ENCODE measurements at regions of chr5 and their contacts with region 1.

Region 1: GRCh38 chr5:18465833-18466591 is 831.8 kb downstream of the TAF11L14 start:
- DNase-seq: peak; percentile 17
- ATAC-seq: peak; percentile 97
- H3K4me3 ChIP-seq: no peak overlapping the region
- H3K27ac ChIP-seq: no peak overlapping the region
- H3K4me1 ChIP-seq: no peaks in the 10 kb centered on the region
- H3K27me3 ChIP-seq: no peaks in the 10 kb centered on the region
- CTCF ChIP-seq: peak; percentile 67 to 83 (median 72)
- EP300 ChIP-seq: no peak
- POLR2A ChIP-seq: no peak
- RAD21 ChIP-seq: peak; percentile 92

Region 2: GRCh38 chr5:17665836-17666235 is 800.2 kb before region 1 on chr5:
- CTCF ChIA-PET with region 1: no interaction called
- POLR2A ChIA-PET with region 1: no interaction called
- RAD21 ChIA-PET with region 1: no interaction called
- SMC1A ChIA-PET with region 1: no interaction called
- in situ Hi-C with region 1: no loop called
- intact Hi-C with region 1: no loop called
- DNase-seq: no peak
- ATAC-seq: no peak
- H3K4me3 ChIP-seq: no peak overlapping the region
- H3K27ac ChIP-seq: no peak overlapping the region
- H3K4me1 ChIP-seq: no peaks in the 10 kb centered on the region
- H3K27me3 ChIP-seq: no peaks in the 10 kb centered on the region
- CTCF ChIP-seq: no peak
- EP300 ChIP-seq: no peak
- POLR2A ChIP-seq: no peak
- RAD21 ChIP-seq: no peak

Region 3: GRCh38 chr5:18455521-18455920 is 10.5 kb before region 1 on chr5:
- CTCF ChIA-PET with region 1: interaction called, 23 read pairs
- POLR2A ChIA-PET with region 1: no interaction called
- RAD21 ChIA-PET with region 1: no interaction called
- SMC1A ChIA-PET with region 1: interaction called, 12 read pairs
- in situ Hi-C with region 1: no loop called
- intact Hi-C with region 1: no loop called
- DNase-seq: no peak
- ATAC-seq: no peak
- H3K4me3 ChIP-seq: no peak overlapping the region
- H3K27ac ChIP-seq: no peak overlapping the region
- H3K4me1 ChIP-seq: no peaks in the 10 kb centered on the region
- H3K27me3 ChIP-seq: no peaks in the 10 kb centered on the region
- CTCF ChIP-seq: no peak
- EP300 ChIP-seq: no peak
- POLR2A ChIP-seq: no peak
- RAD21 ChIP-seq: no peak

Region 4: DNA sequence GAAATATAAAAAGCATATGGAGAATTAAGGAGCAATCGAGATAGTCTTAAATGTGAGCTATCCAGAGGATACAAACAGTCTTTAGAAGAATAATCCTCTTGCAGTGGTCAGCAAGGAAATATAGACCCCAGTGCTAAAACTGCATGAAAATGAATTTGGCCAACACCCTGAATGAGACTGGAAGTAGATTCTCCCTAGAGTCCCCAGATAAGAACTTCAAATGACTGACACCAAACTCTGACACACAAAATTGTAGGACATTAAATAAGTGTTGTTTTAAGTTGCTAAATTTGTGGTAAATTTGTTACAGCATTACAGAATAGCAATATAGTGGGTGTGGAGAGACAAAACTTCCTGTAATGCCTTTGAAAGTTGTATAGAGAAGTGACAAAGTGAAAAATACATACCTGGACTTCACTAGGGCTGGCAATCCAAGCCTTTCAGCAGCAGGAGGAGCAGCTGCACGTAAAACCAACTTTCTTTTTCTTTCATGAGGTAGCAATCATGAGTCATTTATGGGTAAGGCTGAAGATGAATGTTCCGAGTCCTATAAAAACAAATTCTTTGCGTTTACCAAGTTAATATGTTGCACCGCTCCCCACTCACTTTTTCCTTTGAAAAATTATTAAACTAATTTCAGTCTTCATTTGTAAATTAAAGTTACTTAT is 306.3 kb after region 1 on chr5:
- CTCF ChIA-PET with region 1: no interaction called
- POLR2A ChIA-PET with region 1: no interaction called
- RAD21 ChIA-PET with region 1: no interaction called
- SMC1A ChIA-PET with region 1: interaction called, 4 read pairs
- in situ Hi-C with region 1: no loop called
- intact Hi-C with region 1: loop called (anchors 10 kb)
- DNase-seq: no peak
- ATAC-seq: peak; percentile 86
- H3K4me3 ChIP-seq: no peak overlapping the region
- H3K27ac ChIP-seq: no peak overlapping the region
- H3K4me1 ChIP-seq: no peaks in the 10 kb centered on the region
- H3K27me3 ChIP-seq: no peaks in the 10 kb centered on the region
- CTCF ChIP-seq: peak in 2 of 3 experiments; percentile 38 to 50; a peak in 3 of 6 replicates
- EP300 ChIP-seq: no peak
- POLR2A ChIP-seq: no peak
- RAD21 ChIP-seq: peak; percentile 32

Region 5: DNA sequence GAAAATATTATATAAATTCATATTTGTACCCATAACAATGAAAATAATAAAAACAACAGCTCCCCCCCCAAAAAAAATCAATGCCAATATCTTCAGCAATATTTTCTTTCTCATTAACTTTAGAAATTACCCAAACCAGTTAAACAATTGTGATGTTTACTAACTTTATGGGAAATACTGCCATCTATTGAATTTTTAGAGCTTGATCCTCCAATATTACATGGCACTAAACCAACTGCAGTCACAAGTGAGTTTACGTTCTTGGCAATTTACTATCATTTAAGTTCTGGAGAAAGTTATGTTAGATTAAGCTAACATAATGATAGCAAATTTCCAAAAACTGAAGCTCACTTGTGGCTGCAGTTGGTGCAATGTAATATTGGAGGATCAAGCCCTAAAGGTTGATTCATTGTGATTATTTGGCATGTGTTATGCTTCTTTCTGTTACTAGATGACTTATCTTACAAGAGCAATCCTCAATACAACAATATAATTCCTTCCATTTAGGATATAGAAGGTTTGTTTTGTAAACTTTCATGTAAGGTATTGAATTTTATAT is 1142.5 kb after region 1 on chr5:
- CTCF ChIA-PET with region 1: interaction called, 9 read pairs
- POLR2A ChIA-PET with region 1: no interaction called
- RAD21 ChIA-PET with region 1: interaction called, 3 read pairs
- SMC1A ChIA-PET with region 1: interaction called, 4 read pairs
- in situ Hi-C with region 1: no loop called
- intact Hi-C with region 1: loop called (anchors 10 kb)
- DNase-seq: no peak
- ATAC-seq: no peak
- H3K4me3 ChIP-seq: no peak overlapping the region
- H3K27ac ChIP-seq: no peak overlapping the region
- H3K4me1 ChIP-seq: no peaks in the 10 kb centered on the region
- H3K27me3 ChIP-seq: no peaks in the 10 kb centered on the region
- CTCF ChIP-seq: peak in 2 of 3 experiments; percentile 4 to 32; a peak in 1 of 6 replicates
- EP300 ChIP-seq: no peak
- POLR2A ChIP-seq: no peak
- RAD21 ChIP-seq: no peak